ENCODE measurements at regions of chr11 and their contacts with region 1.

Region 1: DNA sequence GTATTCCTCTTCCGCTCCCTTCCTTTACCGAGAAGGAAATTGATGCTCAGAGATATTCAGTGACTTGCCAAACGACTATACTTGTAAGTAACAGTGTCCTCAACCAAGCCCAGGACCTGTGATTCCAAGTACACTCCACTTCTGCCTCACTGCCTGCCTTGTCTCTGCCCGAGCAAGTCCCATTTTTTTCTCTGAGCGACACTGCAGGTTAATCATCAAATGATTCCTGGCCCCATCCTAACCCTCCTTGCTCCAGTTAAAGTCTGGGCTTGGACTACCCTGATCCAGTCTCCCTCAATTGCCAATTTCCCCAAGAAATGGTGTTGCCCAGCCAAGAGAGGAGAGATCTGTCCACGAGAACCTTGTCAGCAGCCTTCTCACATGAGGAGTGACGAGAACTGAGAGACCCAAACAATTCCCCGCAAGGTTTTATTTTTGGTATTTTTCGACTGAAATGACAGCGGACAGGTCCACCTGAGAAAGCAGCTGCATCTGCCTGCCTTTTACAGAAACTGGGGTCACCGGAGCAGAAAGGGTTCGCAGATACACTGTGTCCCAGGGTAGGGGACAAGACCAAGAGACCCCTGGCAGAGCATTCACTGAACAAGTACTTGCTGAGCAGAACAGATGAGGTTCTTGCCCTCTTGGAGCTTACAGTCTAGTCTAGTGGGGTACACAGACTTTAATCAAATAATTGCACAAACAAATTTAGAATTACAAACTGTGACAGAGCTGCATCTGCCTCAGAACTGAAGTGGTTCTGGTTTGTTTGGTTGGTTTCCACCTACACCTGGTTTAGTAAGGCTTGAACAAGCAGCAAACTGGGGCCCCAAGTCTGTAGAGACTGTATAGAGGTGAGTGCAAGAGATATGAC is 11.4 kb downstream of the POU2AF1 start:
- DNase-seq: peak; percentile 80
- ATAC-seq: peak; percentile 60
- H3K4me3 ChIP-seq: peak overlapping the region; percentile 67
- H3K27ac ChIP-seq: peak overlapping the region; percentile 97
- H3K4me1 ChIP-seq: peaks cover 91% of the 10 kb centered on the region
- H3K27me3 ChIP-seq: no peaks in the 10 kb centered on the region
- CTCF ChIP-seq: no peak
- EP300 ChIP-seq: peak; percentile 78 to 92
- POLR2A ChIP-seq: peak; percentile 50; the same call in 1 of the 2 replicates
- RAD21 ChIP-seq: 0 out of 2 replicates have a peak, but pooled peaks have one; percentile 4

Region 2: GRCh38 chr11:111347723-111348115 is 19.9 kb before region 1 on chr11:
- CTCF ChIA-PET with region 1: no interaction called
- POLR2A ChIA-PET with region 1: interaction called, 3 read pairs
- RAD21 ChIA-PET with region 1: interaction called, 3 read pairs
- SMC1A ChIA-PET with region 1: interaction called, 11 read pairs
- in situ Hi-C with region 1: no loop called
- intact Hi-C with region 1: no loop called
- DNase-seq: no peak
- ATAC-seq: no peak
- H3K4me3 ChIP-seq: no peak overlapping the region
- H3K27ac ChIP-seq: no peak overlapping the region
- H3K4me1 ChIP-seq: peaks cover 5% of the 10 kb centered on the region; the same call in 1 of the 2 replicates
- H3K27me3 ChIP-seq: no peaks in the 10 kb centered on the region
- CTCF ChIP-seq: no peak
- EP300 ChIP-seq: no peak
- POLR2A ChIP-seq: 0 out of 2 replicates have a peak, but pooled peaks have one; percentile 25
- RAD21 ChIP-seq: no peak

Region 3: DNA sequence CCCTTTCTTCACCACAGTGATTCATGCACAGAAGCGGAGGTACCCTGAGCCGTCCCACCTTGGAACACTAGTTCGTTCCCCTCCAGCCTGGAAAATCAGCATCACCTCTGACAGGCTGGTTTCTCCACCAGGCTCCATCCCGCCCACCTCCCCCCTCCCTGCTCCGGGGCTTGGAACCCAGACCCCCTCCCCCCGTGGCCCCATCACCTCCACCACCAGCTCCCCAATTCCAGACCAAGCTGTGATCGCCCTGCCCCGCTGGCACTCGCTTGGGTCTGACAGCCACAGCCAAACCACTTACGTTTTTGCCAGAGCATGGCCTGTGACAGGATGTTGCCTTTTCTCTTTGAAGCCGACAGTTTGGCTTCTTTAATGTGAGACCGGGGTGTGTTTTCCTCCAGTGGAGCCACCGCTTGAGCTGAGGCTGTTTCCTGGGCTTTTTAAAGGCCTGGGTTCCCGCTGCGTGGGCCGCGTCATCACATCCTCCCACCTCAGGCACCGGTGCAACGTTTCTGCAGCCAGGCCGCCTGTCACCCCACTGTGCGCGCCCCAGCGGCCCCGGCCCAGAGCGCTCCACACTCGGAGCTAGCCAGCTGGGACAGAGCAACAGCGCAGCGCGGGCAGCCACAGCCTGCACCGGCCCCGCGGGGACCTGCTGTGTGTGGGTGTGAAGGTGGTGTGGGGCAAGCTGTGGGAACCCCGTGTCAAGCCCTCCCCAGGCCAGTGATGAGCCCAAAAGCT is 11.4 kb after region 1 on chr11 and contains the start of gene POU2AF1:
- CTCF ChIA-PET with region 1: interaction called, 7 read pairs
- POLR2A ChIA-PET with region 1: interaction called, 63 read pairs
- RAD21 ChIA-PET with region 1: interaction called, 40 read pairs
- SMC1A ChIA-PET with region 1: interaction called, 46 read pairs
- in situ Hi-C with region 1: no loop called
- intact Hi-C with region 1: no loop called
- DNase-seq: peak; percentile 82
- ATAC-seq: peak; percentile 76
- H3K4me3 ChIP-seq: peak within 1 kb of the TSS; percentile 69
- H3K27ac ChIP-seq: peak within 1 kb of the TSS; percentile 97
- H3K4me1 ChIP-seq: peaks cover 17% of the 10 kb centered on the region
- H3K27me3 ChIP-seq: no peaks in the 10 kb centered on the region
- CTCF ChIP-seq: no peak
- EP300 ChIP-seq: no peak; a peak in 1 of 4 replicates
- POLR2A ChIP-seq: peak; percentile 96
- RAD21 ChIP-seq: no peak
- polyA plus RNA-seq, gene POU2AF1: 13.1 to 92.7 TPM

Region 4: DNA sequence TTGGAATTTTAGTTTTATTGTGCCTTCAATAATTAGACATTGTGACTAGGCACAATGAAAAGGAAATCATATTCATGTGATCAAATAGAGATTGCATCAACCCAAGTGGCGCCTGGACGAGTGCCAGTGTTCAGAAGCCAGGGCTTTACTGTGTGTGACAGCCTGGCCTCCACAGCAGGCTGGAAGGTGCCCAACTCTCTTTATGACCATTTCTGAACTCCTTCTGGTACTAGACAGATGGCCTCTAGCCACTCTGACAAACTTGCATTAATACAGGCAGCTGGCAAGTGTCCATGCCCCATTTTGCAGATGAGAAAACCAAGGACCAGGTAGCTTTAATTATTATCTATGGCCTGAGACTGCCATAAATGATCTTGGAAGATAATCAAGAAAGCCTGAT is 19.7 kb after region 1 on chr11:
- CTCF ChIA-PET with region 1: interaction called, 7 read pairs
- POLR2A ChIA-PET with region 1: interaction called, 12 read pairs
- RAD21 ChIA-PET with region 1: interaction called, 4 read pairs
- SMC1A ChIA-PET with region 1: interaction called, 10 read pairs
- in situ Hi-C with region 1: no loop called
- intact Hi-C with region 1: no loop called
- DNase-seq: no peak
- ATAC-seq: no peak
- H3K4me3 ChIP-seq: no peak overlapping the region
- H3K27ac ChIP-seq: no peak overlapping the region
- H3K4me1 ChIP-seq: peaks cover 15% of the 10 kb centered on the region
- H3K27me3 ChIP-seq: no peaks in the 10 kb centered on the region
- CTCF ChIP-seq: no peak
- EP300 ChIP-seq: no peak
- POLR2A ChIP-seq: no peak
- RAD21 ChIP-seq: no peak